ENCODE measurements at regions of chr5 and their contacts with region 1.

Region 1: GRCh38 chr5:41856644-41857491 is 13.4 kb downstream of the OXCT1 start:
- DNase-seq: peak in 1 of 2 donors; percentile 36
- H3K4me3 ChIP-seq: no peak overlapping the region
- H3K27ac ChIP-seq: no peak overlapping the region
- H3K4me1 ChIP-seq: no peaks in the 10 kb centered on the region
- H3K27me3 ChIP-seq: no peaks in the 10 kb centered on the region
- CTCF ChIP-seq: peak; percentile 70 to 75

Region 2: GRCh38 chr5:41903892-41904799 is 47.3 kb after region 1 on chr5 and contains the start of gene RIMOC1:
- intact Hi-C with region 1: loop called (anchors 10 kb)
- DNase-seq: peak; percentile 98 to 100
- H3K4me3 ChIP-seq: peak within 1 kb of the TSS; percentile 81 to 91
- H3K27ac ChIP-seq: peak within 1 kb of the TSS; percentile 94
- H3K4me1 ChIP-seq: peaks cover 0 to 33% (median 14%) of the 10 kb centered on the region in 4 donors
- H3K27me3 ChIP-seq: no peaks in the 10 kb centered on the region
- CTCF ChIP-seq: no peak

Region 3: GRCh38 chr5:41935544-41935943 is 78.7 kb after region 1 on chr5:
- intact Hi-C with region 1: no loop called
- DNase-seq: no peak
- H3K4me3 ChIP-seq: no peak overlapping the region
- H3K27ac ChIP-seq: no peak overlapping the region
- H3K4me1 ChIP-seq: no peaks in the 10 kb centered on the region
- H3K27me3 ChIP-seq: no peaks in the 10 kb centered on the region
- CTCF ChIP-seq: no peak

Measured in tibial artery (tissue), 4 donors.